ENCODE measurements at regions of chr17 and their contacts with region 1.

Region 1: GRCh38 chr17:57255776-57256681 is at the start of gene MSI2:
- DNase-seq: peak; percentile 87 to 97 (median 92)
- ATAC-seq: peak; percentile 76
- H3K4me3 ChIP-seq: peak within 1 kb of the TSS; percentile 73 to 81
- H3K4me3 Mint-ChIP-seq: peak within 1 kb of the TSS; percentile 92
- H3K27ac ChIP-seq: peak within 1 kb of the TSS; percentile 64 to 84
- H3K27ac Mint-ChIP-seq: peak within 1 kb of the TSS; percentile 93
- H3K4me1 ChIP-seq: peaks cover 37% of the 10 kb centered on the region
- H3K4me1 Mint-ChIP-seq: peaks cover 49% of the 10 kb centered on the region
- H3K27me3 ChIP-seq: no peaks in the 10 kb centered on the region
- H3K27me3 Mint-ChIP-seq: no peaks in the 10 kb centered on the region
- CTCF ChIP-seq: no peak
- total RNA-seq, gene MSI2: 130 to 135 TPM

Region 2: DNA sequence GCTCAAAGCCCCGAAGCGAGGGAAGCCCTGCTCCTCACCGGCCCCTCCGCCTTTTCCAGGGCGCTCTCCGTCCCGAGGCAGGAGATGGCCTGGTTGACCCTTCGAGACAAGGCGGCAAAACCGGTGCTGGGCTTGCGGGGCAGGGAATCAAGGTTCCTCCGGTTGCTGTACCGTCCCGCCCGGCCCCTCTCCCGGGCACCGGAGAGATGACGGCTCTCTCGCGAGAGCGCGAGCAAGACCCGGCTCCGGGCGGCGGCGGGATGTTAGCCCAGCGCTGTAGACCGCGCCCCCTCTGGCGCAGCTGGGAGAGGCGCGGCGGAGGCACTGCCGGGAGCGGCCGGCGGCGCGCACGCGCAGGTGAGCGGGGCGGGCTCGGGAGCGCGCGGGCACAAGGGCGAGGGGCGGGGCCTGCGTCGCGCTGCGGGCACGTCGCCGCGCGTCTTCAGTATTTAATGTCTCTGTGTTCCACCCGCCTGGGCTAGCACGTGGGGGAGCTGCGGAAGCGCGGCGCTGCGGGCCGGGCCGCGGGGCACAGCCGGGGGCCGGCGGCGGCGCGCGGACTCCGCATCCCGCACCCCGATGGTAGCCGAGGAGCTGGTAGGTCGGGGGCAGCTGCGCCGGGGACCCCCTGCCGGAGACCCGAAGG is 171.1 kb before region 1 on chr17 and contains the start of gene AKAP1:
- CTCF ChIA-PET with region 1: interaction called, 3 read pairs
- POLR2A ChIA-PET with region 1: no interaction called
- intact Hi-C with region 1: loop called (anchors 2 to 5 kb)
- DNase-seq: peak; percentile 89 to 98 (median 94)
- ATAC-seq: peak; percentile 86
- H3K4me3 ChIP-seq: peak within 1 kb of the TSS; percentile 88 to 95
- H3K4me3 Mint-ChIP-seq: peak within 1 kb of the TSS; percentile 91
- H3K27ac ChIP-seq: peak within 1 kb of the TSS; percentile 87 to 93
- H3K27ac Mint-ChIP-seq: peak within 1 kb of the TSS; percentile 93
- H3K4me1 ChIP-seq: peaks cover 12% of the 10 kb centered on the region
- H3K4me1 Mint-ChIP-seq: peaks cover 38% of the 10 kb centered on the region
- H3K27me3 ChIP-seq: no peaks in the 10 kb centered on the region
- H3K27me3 Mint-ChIP-seq: no peaks in the 10 kb centered on the region
- CTCF ChIP-seq: no peak
- total RNA-seq, gene AKAP1: 20.6 to 23.5 TPM

Region 3: GRCh38 chr17:57440522-57441485 is 184.8 kb after region 1 on chr17:
- CTCF ChIA-PET with region 1: interaction called, 4 read pairs
- POLR2A ChIA-PET with region 1: no interaction called
- intact Hi-C with region 1: loop called (anchors 2 kb)
- DNase-seq: peak; percentile 31 to 89 (median 63)
- ATAC-seq: peak; percentile 82
- H3K4me3 ChIP-seq: peak overlapping the region in 1 of 2 experiments; percentile 14
- H3K4me3 Mint-ChIP-seq: peak overlapping the region; percentile 8
- H3K27ac ChIP-seq: peak overlapping the region in 1 of 2 experiments; percentile 37
- H3K27ac Mint-ChIP-seq: peak overlapping the region; percentile 94
- H3K4me1 ChIP-seq: peaks cover 41% of the 10 kb centered on the region
- H3K4me1 Mint-ChIP-seq: peaks cover 72% of the 10 kb centered on the region
- H3K27me3 ChIP-seq: no peaks in the 10 kb centered on the region
- H3K27me3 Mint-ChIP-seq: no peaks in the 10 kb centered on the region
- CTCF ChIP-seq: peak; percentile 20

Region 4: DNA sequence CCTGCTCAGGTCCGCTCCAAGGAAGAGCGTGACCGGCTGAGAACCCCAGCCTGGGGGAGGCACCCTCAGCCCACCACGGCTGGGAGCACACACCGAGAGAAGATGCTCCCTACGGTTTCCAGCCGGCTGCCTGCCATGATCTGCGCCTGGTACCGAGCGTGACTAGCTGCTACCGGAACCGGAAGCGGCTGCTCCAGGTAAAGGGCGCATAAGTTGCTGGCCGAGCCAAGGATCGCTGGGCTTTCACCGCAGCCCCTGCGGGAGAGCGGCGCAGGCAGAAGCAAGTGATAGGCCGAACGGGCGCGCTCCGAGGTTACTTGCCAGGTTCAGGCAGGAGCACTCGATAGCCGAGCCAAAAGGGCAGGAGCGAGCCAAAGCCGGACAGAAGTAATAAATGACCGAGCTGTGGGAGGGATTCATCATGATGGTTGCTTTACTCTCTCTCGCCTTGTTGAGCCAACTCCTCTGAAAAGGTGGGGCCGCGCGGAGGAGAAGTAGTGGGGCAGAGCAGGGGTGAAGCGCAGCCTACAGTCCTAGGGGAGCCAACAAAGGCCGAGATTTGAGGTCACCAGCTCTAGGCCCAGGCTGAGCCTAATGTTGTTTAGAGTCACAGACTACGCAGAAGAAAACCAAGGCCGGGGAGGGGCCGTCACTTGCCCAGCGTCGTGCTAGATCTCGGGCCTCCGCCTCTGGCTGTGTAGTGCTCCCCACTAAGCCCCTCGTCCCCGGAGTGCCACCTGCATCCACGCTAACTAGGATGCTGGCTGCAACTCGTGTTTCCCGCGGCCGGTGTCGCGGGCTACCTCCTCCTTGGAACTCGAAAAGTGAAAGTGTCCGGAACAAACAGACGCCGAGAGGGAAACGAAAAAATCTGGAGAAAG is 594.1 kb after region 1 on chr17 and contains the start of gene MRPS23:
- CTCF ChIA-PET with region 1: no interaction called
- POLR2A ChIA-PET with region 1: no interaction called
- intact Hi-C with region 1: loop called (anchors 1 to 5 kb)
- DNase-seq: peak; percentile 91 to 99 (median 95)
- ATAC-seq: peak; percentile 94
- H3K4me3 ChIP-seq: peak within 1 kb of the TSS; percentile 74 to 82
- H3K4me3 Mint-ChIP-seq: peak within 1 kb of the TSS; percentile 95
- H3K27ac ChIP-seq: peak within 1 kb of the TSS; percentile 88 to 91
- H3K27ac Mint-ChIP-seq: peak within 1 kb of the TSS; percentile 100
- H3K4me1 ChIP-seq: peaks cover 32% of the 10 kb centered on the region
- H3K4me1 Mint-ChIP-seq: peaks cover 44% of the 10 kb centered on the region
- H3K27me3 ChIP-seq: no peaks in the 10 kb centered on the region
- H3K27me3 Mint-ChIP-seq: no peaks in the 10 kb centered on the region
- CTCF ChIP-seq: no peak
- total RNA-seq, gene MRPS23: 16.2 to 17.2 TPM

Region 5: GRCh38 chr17:58329035-58329809 is 1073.2 kb after region 1 on chr17:
- CTCF ChIA-PET with region 1: no interaction called
- POLR2A ChIA-PET with region 1: no interaction called
- intact Hi-C with region 1: loop called in 1 of 2 experiments (anchors 5 kb)
- DNase-seq: peak in 8 of 9 experiments; percentile 56 to 90 (median 77)
- ATAC-seq: peak; percentile 36
- H3K4me3 ChIP-seq: peak overlapping the region; percentile 90 to 99
- H3K4me3 Mint-ChIP-seq: peak overlapping the region; percentile 92
- H3K27ac ChIP-seq: peak overlapping the region; percentile 48 to 99
- H3K27ac Mint-ChIP-seq: peak overlapping the region; percentile 96
- H3K4me1 ChIP-seq: peaks cover 47% of the 10 kb centered on the region
- H3K4me1 Mint-ChIP-seq: peaks cover 54% of the 10 kb centered on the region
- H3K27me3 ChIP-seq: no peaks in the 10 kb centered on the region
- H3K27me3 Mint-ChIP-seq: no peaks in the 10 kb centered on the region
- CTCF ChIP-seq: peak; percentile 84

Measured in CD8-positive, alpha-beta T cell (primary cell).